Activated T-helper 2 cell treated with anti-CD3 and anti-CD28 coated beads, Interferon-gamma antibody, Interleukin-2, Interleukin-4, amounts not matched to agents 10 μg/mL and 5 μg/mL and 100 μg/mL, durations not matched to agents 14 hours and 24 hours and 36 hours (primary cell): ENCODE measurements at regions of chr10 and their contacts with region 1.

Region 1: DNA sequence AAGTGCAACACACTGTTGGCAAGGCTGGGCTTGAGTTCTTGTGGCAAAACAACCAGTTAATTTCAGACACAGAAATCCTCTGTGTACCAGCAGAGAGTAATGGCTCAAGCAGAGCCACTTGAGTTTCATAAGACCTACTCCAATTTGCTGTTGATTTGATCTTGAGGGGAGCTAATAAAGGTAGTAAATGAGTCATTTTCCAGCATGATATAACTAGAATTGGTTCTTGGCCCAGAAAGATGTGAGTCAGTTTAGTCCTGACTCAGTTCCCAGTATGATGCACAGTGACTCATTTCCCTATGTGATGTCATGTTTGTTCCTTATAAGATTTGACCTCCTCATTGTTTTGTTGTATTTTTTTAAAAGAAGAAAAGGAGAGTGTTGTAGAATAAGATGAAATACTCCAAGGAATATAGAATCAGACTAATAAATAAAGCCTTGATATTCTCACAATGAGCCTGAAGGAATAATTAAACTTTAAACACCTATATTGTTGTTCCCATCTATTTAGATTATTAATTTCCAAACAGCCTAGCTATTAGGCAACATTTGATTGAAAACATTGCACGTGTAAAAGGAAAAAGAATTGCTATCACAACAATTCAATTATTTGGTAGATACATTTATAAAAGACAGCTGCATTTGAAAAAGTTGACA is 186.2 kb downstream of the REEP3 start:
- DNase-seq: no peak
- H3K4me3 Mint-ChIP-seq: no peak overlapping the region
- H3K27ac Mint-ChIP-seq: peak overlapping the region; percentile 37
- H3K4me1 Mint-ChIP-seq: peaks cover 26% of the 10 kb centered on the region
- H3K27me3 Mint-ChIP-seq: peaks cover 2% of the 10 kb centered on the region

Region 2: DNA sequence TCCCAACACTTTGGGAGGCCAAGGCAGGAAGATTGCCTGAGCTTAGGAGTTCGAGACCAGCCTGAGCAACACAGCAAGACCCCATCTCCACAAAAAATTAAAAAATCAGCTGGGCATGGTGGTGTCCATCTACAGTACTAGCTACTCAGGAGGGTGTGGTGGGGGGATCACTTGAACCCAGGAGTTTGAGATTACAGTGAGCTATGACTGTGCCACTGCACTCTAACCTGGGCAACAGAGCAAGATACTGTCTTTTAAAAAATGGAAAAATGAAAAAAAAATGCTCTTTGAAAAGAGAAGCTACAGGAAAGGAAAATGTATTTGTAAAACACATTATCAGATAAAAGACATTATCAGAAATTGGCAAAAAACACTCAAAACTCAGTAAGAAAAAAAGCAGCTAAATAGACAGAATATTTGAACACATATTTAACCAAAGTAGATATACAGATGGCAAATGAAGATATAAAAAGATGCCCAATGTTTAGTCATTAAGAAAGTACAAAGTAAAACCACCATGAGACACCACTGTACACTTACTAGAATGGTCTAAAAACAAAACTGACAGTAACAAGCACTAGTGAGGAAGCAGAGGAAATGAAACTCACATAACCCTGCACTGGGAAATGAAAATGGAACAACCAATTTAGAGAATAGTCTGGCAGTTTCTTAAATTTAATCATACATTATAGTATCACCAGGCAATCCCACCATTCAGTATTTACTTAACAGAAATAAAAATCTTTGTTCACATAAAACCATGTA is 533.7 kb before region 1 on chr10:
- intact Hi-C with region 1: loop called (anchors 1 kb)
- DNase-seq: no peak
- H3K4me3 Mint-ChIP-seq: no peak overlapping the region
- H3K27ac Mint-ChIP-seq: peak overlapping the region; percentile 29
- H3K4me1 Mint-ChIP-seq: peaks cover 55% of the 10 kb centered on the region
- H3K27me3 Mint-ChIP-seq: no peaks in the 10 kb centered on the region

Region 3: GRCh38 chr10:63388421-63389031 is 318.9 kb before region 1 on chr10:
- intact Hi-C with region 1: loop called (anchors 10 kb)
- DNase-seq: no peak
- H3K4me3 Mint-ChIP-seq: peak overlapping the region; percentile 61
- H3K27ac Mint-ChIP-seq: peak overlapping the region; percentile 45
- H3K4me1 Mint-ChIP-seq: peaks cover 42% of the 10 kb centered on the region
- H3K27me3 Mint-ChIP-seq: peaks cover 2% of the 10 kb centered on the region

Region 4: DNA sequence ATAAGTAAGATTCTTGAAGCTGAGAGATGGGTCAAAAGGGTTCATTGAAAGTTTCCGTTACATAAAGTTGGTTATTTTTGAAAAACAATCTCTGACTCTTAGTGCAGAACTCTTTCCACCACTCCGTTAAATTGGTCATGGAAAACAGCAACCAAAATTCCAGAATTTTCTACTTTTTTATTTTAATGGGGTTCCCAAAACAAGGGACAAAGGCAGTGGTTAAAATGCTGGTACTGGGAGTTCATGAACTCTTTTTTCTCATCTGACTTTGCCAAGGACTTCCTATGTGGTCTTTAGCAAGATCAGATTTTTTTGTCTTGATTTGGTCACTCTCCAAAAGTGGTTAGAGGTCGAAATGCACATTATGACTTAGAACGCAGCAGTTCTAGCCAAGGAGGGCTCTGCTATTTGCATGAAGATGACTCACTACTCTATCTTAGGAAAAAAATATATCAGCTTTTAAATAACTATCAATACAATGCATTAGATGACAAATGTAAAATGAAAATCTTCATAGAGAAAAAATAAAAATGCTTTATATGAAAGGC is 40.5 kb before region 1 on chr10:
- intact Hi-C with region 1: loop called (anchors 5 kb)
- DNase-seq: no peak
- H3K4me3 Mint-ChIP-seq: no peak overlapping the region
- H3K27ac Mint-ChIP-seq: no peak overlapping the region
- H3K4me1 Mint-ChIP-seq: peaks cover 8% of the 10 kb centered on the region
- H3K27me3 Mint-ChIP-seq: peaks cover 29% of the 10 kb centered on the region

Region 5: DNA sequence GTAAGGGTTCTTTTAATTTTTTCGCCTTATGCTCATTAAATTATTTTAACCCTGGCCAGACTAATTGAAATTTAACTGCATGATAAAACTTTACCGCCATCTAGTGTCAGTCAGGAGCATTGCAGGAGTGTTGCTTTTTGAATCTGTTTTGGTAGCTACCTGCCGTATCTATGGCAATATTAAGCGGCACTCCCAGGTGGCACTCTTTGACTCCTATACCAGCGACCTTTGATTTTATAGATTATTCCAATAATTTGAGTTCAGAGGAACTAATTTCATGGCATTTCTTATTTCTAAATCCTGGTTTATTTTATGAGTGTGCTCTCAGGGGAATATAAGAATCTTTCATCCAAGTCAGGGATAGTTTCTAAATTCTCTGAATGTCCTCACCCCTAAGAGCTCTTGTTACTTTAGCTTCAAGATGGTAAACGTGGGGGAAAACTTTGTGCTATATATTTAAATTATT is 12.7 kb after region 1 on chr10:
- intact Hi-C with region 1: no loop called
- DNase-seq: peak; percentile 33
- H3K4me3 Mint-ChIP-seq: no peak overlapping the region
- H3K27ac Mint-ChIP-seq: no peak overlapping the region
- H3K4me1 Mint-ChIP-seq: peaks cover 21% of the 10 kb centered on the region
- H3K27me3 Mint-ChIP-seq: peaks cover 25% of the 10 kb centered on the region

Region 6: GRCh38 chr10:63972949-63973827 is 265.8 kb after region 1 on chr10:
- intact Hi-C with region 1: no loop called
- DNase-seq: no peak
- H3K4me3 Mint-ChIP-seq: no peak overlapping the region
- H3K27ac Mint-ChIP-seq: no peak overlapping the region
- H3K4me1 Mint-ChIP-seq: no peaks in the 10 kb centered on the region
- H3K27me3 Mint-ChIP-seq: no peaks in the 10 kb centered on the region